ENCODE measurements at regions of chr12 and their contacts with region 1.

Region 1: DNA sequence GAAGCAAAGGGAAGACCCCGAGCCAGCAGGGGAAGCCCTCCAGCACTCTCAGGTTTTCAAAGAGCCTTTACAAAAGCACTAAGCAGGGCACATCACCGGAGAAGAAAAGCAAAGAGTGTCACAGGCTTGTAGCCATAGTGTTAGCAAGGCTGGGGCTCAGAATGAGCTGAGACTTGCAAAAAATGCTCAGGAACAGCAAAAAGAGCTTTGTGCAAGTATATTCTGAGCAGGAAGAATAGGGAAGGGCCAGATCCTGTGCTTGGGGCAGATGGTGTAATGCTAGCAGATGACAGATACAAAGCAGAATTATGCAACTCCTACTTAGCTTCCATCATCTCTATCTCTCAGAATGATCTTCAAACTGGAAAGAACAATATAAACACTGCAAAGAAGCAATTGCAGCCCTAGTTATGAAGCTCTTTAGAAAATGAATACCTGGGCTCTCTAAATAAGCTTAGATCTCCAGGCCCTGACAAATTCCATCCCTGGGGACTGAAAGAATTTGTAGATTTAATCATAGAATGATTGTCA is 23.7 kb upstream of the PARP11 start:
- DNase-seq: peak in 3 of 14 experiments; percentile 36 to 43 (median 42)
- ATAC-seq: peak; percentile 33
- H3K4me3 ChIP-seq: peak overlapping the region; percentile 33
- H3K4me3 Mint-ChIP-seq: peak overlapping the region; percentile 76
- H3K27ac ChIP-seq: peak overlapping the region; percentile 69 to 87
- H3K27ac Mint-ChIP-seq: no peak overlapping the region
- H3K4me1 ChIP-seq: peaks cover 78% of the 10 kb centered on the region
- H3K4me1 Mint-ChIP-seq: peaks cover 48% of the 10 kb centered on the region
- H3K27me3 ChIP-seq: no peaks in the 10 kb centered on the region
- H3K27me3 Mint-ChIP-seq: no peaks in the 10 kb centered on the region
- CTCF ChIP-seq: no peak

Region 2: DNA sequence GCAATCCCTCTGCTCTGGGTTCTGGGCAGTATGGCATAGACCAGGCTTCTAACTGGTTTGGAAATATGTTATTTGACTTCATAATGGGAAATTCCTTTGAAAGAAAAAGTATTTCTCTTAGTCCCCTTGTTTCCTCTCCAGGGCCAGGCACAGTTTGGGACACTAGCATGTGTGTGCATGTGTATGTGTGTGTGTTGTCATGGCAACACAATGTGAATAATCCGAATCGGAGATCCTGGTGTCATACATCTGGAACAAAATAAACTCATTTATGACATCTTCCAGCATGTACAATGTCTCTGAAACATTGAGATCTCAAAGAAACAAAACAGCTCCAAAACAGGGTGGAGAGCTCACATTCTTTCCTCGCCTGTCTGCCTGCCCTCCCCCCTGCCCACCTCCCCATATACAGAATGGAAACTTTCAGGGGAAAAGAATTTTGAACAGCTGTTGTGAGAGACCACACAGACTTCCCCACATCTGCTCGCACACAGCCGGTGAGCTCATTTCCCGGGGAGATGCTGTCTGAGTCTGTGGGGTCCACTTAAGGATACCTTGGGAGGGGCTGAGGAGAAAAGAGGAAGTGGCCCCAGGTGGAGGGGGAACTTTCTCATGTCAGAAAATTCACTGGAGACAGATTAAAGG is 31.8 kb after region 1 on chr12:
- CTCF ChIA-PET with region 1: no interaction called
- POLR2A ChIA-PET with region 1: interaction called, 13 read pairs
- intact Hi-C with region 1: loop called in 1 of 2 experiments (anchors 5 kb)
- DNase-seq: no peak
- ATAC-seq: no peak
- H3K4me3 ChIP-seq: no peak overlapping the region
- H3K4me3 Mint-ChIP-seq: no peak overlapping the region
- H3K27ac ChIP-seq: no peak overlapping the region
- H3K27ac Mint-ChIP-seq: peak overlapping the region; percentile 17
- H3K4me1 ChIP-seq: peaks cover 53% of the 10 kb centered on the region
- H3K4me1 Mint-ChIP-seq: peaks cover 72% of the 10 kb centered on the region
- H3K27me3 ChIP-seq: no peaks in the 10 kb centered on the region
- H3K27me3 Mint-ChIP-seq: no peaks in the 10 kb centered on the region
- CTCF ChIP-seq: no peak

Region 3: GRCh38 chr12:3973978-3974644 is 77.2 kb after region 1 on chr12:
- CTCF ChIA-PET with region 1: no interaction called
- POLR2A ChIA-PET with region 1: interaction called, 14 read pairs
- intact Hi-C with region 1: no loop called
- DNase-seq: peak in 4 of 14 experiments; percentile 22 to 60 (median 54)
- ATAC-seq: peak; percentile 48
- H3K4me3 ChIP-seq: no peak overlapping the region
- H3K4me3 Mint-ChIP-seq: peak overlapping the region; percentile 17
- H3K27ac ChIP-seq: peak overlapping the region; percentile 38 to 60
- H3K27ac Mint-ChIP-seq: peak overlapping the region; percentile 84
- H3K4me1 ChIP-seq: peaks cover 49% of the 10 kb centered on the region
- H3K4me1 Mint-ChIP-seq: peaks cover 66% of the 10 kb centered on the region
- H3K27me3 ChIP-seq: no peaks in the 10 kb centered on the region
- H3K27me3 Mint-ChIP-seq: no peaks in the 10 kb centered on the region
- CTCF ChIP-seq: no peak

Region 4: DNA sequence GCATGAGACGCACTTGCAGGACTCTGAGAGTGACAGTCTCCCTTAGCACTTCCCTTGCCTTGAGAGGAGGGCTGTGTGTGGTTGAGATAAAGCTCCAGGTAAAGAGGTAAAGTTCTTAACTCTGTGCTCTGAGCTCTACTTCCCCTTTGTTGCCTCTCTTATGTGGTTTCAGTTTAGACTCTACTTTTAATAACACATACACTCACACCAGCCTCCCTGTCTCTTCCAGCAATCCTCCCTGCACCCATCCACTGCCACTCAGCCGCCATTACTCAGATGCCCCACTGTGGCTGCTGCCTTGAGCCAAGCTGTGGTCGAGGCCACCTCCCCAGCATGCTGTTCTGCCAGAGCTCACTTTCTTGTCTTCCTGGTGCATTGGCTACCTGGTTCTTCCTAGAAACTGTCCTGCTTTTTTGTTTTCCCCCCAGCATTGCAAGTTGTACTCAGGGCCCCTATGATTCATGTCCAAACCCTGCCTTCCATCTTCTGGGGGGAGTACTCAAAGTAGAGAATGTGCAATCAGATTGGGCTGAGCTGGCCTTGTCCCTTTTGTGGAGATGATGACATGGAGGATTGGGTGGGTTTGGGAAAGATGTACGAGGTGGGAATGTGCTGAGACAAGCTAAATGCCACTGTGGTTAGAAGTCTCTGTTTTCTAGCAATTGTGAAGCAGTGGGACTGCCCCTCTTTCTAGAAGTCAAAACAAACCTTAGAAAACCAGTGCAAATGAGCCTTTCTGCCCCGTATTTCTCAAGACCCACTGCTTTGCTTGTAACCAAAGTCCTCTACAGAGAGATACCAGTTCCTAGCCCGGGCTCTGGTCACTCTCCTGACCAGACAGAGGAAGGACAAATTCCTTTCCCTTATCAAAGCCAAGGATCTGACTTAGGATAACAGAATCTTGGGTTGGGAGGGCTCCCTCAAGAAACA is 91.9 kb after region 1 on chr12:
- CTCF ChIA-PET with region 1: no interaction called
- POLR2A ChIA-PET with region 1: interaction called, 10 read pairs
- intact Hi-C with region 1: no loop called
- DNase-seq: peak in 8 of 14 experiments; percentile 9 to 63 (median 45)
- ATAC-seq: peak; percentile 94
- H3K4me3 ChIP-seq: peak overlapping the region; percentile 10
- H3K4me3 Mint-ChIP-seq: peak overlapping the region; percentile 52
- H3K27ac ChIP-seq: peak overlapping the region; percentile 43 to 55
- H3K27ac Mint-ChIP-seq: peak overlapping the region; percentile 84
- H3K4me1 ChIP-seq: peaks cover 22% of the 10 kb centered on the region
- H3K4me1 Mint-ChIP-seq: peaks cover 36% of the 10 kb centered on the region
- H3K27me3 ChIP-seq: no peaks in the 10 kb centered on the region
- H3K27me3 Mint-ChIP-seq: no peaks in the 10 kb centered on the region
- CTCF ChIP-seq: no peak